ENCODE measurements at regions of chr5 and their contacts with region 1.

Region 1: DNA sequence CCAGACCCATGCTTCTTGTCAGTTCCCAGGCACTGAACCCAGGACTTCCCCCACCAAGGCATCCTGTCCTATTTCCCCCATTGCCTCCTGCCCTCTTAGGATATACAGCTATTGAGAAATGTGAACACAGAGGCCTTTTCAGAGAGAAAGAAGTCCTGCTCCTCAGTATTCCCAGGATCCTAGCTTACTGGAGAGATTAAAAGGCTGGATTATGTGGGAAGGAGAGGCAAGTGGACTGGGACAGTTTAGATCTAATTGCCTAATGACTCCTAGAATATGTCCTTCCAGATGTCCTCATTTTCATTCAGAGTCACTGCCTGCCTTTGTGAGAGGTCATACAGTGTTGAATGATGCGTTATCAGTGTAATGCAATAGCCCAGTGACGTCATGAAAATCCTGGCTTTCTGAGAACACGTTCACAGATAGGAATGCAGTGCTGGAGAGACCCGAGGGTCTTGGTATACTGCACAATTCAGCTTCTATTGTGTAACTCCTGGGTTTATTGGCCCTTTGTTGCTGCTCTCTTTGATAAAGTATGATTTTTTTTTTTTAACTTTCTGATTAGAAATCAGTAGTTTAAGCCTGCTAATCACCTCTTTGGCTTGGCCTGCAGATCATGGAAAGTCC is 26.2 kb downstream of the WWC1 start:
- DNase-seq: peak; percentile 93
- H3K4me3 Mint-ChIP-seq: no peak overlapping the region
- H3K27ac Mint-ChIP-seq: peak overlapping the region; percentile 20
- H3K4me1 Mint-ChIP-seq: peaks cover 38% of the 10 kb centered on the region
- H3K27me3 Mint-ChIP-seq: no peaks in the 10 kb centered on the region
- CTCF ChIP-seq: no peak

Region 2: GRCh38 chr5:168135897-168136296 is 181.7 kb before region 1 on chr5:
- CTCF ChIA-PET with region 1: no interaction called
- POLR2A ChIA-PET with region 1: no interaction called
- intact Hi-C with region 1: no loop called
- DNase-seq: no peak
- H3K4me3 Mint-ChIP-seq: no peak overlapping the region
- H3K27ac Mint-ChIP-seq: no peak overlapping the region
- H3K4me1 Mint-ChIP-seq: no peaks in the 10 kb centered on the region
- H3K27me3 Mint-ChIP-seq: peaks cover 64% of the 10 kb centered on the region
- CTCF ChIP-seq: no peak

Region 3: GRCh38 chr5:168301593-168302388 is 15.8 kb before region 1 on chr5:
- CTCF ChIA-PET with region 1: interaction called, 18 read pairs
- POLR2A ChIA-PET with region 1: interaction called, 18 read pairs
- intact Hi-C with region 1: no loop called
- DNase-seq: peak; percentile 71
- H3K4me3 Mint-ChIP-seq: no peak overlapping the region
- H3K27ac Mint-ChIP-seq: peak overlapping the region; percentile 83
- H3K4me1 Mint-ChIP-seq: peaks cover 25% of the 10 kb centered on the region
- H3K27me3 Mint-ChIP-seq: no peaks in the 10 kb centered on the region
- CTCF ChIP-seq: no peak

Region 4: GRCh38 chr5:168328814-168329213 is 11.2 kb after region 1 on chr5:
- CTCF ChIA-PET with region 1: interaction called, 6 read pairs
- POLR2A ChIA-PET with region 1: interaction called, 14 read pairs
- intact Hi-C with region 1: no loop called
- DNase-seq: no peak
- H3K4me3 Mint-ChIP-seq: no peak overlapping the region
- H3K27ac Mint-ChIP-seq: no peak overlapping the region
- H3K4me1 Mint-ChIP-seq: peaks cover 29% of the 10 kb centered on the region
- H3K27me3 Mint-ChIP-seq: no peaks in the 10 kb centered on the region
- CTCF ChIP-seq: no peak

Region 5: GRCh38 chr5:169019871-169020501 is 702.4 kb after region 1 on chr5:
- CTCF ChIA-PET with region 1: no interaction called
- POLR2A ChIA-PET with region 1: no interaction called
- intact Hi-C with region 1: no loop called
- DNase-seq: no peak
- H3K4me3 Mint-ChIP-seq: no peak overlapping the region
- H3K27ac Mint-ChIP-seq: no peak overlapping the region
- H3K4me1 Mint-ChIP-seq: no peaks in the 10 kb centered on the region
- H3K27me3 Mint-ChIP-seq: no peaks in the 10 kb centered on the region
- CTCF ChIP-seq: no peak